ENCODE measurements at regions of chr1 and their contacts with region 1.

Region 1: GRCh38 chr1:169546087-169546995 is 39.9 kb downstream of the F5 start:
- DNase-seq: peak; percentile 65 to 68 (median 66)
- H3K4me3 ChIP-seq: no peak overlapping the region
- H3K4me3 Mint-ChIP-seq: no peak overlapping the region
- H3K27ac ChIP-seq: no peak overlapping the region
- H3K27ac Mint-ChIP-seq: no peak overlapping the region
- H3K4me1 ChIP-seq: no peaks in the 10 kb centered on the region
- H3K4me1 Mint-ChIP-seq: peaks cover 0 to 2% (median under 1%) of the 10 kb centered on the region in 4 donors
- H3K27me3 ChIP-seq: no peaks in the 10 kb centered on the region
- H3K27me3 Mint-ChIP-seq: no peaks in the 10 kb centered on the region

Region 2: DNA sequence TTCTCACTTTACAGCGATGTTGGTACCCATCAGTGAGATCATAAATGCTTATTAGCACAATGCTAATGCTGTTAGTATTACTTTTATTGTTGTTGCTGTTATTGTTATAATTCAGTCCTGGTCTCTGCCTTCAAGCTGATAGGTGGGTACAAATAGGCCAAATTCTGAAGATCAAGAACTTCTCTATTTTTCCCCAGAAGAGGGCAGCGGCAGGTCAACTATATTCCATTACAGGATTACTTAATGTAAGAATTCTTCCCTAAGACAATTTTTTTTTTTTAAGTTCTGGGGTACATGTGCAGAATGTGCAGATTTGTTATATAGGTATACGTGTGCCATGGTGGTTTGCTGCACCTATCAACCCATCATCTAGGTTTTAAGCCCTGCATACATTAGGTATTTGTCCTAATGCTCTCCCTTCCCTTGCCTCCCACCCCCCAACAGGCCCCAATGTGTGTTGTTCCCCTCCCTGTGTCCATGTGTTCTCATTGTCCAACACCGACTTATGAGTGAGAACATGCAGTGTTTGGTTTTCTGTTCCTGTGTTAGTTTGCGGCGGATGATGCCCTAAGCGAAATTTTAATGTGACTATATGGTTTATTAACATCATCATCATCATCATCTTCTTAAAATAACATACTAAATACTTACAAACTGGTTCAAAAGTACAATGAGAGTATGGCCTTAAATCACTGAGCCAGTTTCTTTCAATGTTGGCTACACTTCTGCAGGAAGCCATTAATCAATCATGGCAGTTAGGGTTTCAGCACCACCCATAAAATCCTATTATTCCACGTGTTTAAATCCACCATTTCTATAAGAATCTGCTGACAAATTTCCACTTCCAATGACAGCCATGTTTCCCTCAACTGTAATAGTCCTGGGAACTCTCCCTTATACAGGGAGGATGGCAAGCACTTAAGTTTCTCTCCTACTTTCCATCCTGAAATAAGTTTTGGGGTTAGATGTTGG is 79.8 kb before region 1 on chr1:
- CTCF ChIA-PET with region 1: interaction called, 28 read pairs
- POLR2A ChIA-PET with region 1: interaction called, 5 read pairs
- intact Hi-C with region 1: loop called (anchors 1 kb)
- DNase-seq: peak in 2 of 5 donors; percentile 12 to 24
- H3K4me3 ChIP-seq: no peak overlapping the region
- H3K4me3 Mint-ChIP-seq: no peak overlapping the region
- H3K27ac ChIP-seq: no peak overlapping the region
- H3K27ac Mint-ChIP-seq: peak overlapping the region in 1 of 7 donors; percentile 17
- H3K4me1 ChIP-seq: no peaks in the 10 kb centered on the region
- H3K4me1 Mint-ChIP-seq: no peaks in the 10 kb centered on the region
- H3K27me3 ChIP-seq: no peaks in the 10 kb centered on the region
- H3K27me3 Mint-ChIP-seq: no peaks in the 10 kb centered on the region

Region 3: DNA sequence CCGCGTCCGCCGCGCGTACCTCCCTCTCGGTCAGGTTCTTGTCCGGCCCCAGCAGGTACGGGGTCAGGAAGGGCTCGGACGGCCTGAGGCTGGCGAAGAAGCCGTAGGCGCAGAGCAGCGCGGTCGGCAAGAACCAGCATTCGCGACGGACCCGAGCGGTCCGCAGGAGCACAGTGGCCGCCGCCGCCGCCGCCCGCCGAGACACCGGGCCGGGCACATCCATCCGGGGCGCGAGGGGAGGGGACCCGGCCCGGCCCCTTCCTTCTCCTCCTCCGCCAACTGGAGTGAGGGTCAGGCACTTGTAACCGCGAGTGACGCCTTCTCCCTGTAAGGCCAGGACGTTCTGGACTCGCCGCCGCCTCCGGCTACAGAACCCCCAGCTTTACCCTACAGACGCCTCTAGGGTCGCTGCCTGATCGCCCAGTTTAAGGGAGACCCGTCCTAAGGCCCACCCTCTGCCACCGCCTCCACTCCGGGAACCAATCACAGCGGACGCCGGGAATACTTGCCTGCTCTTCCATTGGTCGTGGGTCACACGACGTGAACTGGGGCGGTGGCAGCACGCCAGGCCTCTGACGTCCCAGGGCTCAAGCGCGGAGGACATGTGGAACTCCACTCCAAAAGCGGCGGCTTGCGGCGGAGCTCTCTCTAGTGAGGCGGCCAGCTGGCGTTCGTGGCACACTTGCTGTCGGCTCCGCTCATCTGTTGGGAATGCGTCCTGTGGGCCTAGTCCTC is 60.6 kb before region 1 on chr1 and contains the start of gene SLC19A2:
- CTCF ChIA-PET with region 1: interaction called, 6 read pairs
- POLR2A ChIA-PET with region 1: no interaction called
- intact Hi-C with region 1: loop called (anchors 5 kb)
- DNase-seq: peak; percentile 89 to 96 (median 91)
- H3K4me3 ChIP-seq: peak within 1 kb of the TSS; percentile 60 to 63
- H3K4me3 Mint-ChIP-seq: peak within 1 kb of the TSS; percentile 93 to 97 (median 95)
- H3K27ac ChIP-seq: peak within 1 kb of the TSS; percentile 73
- H3K27ac Mint-ChIP-seq: peak within 1 kb of the TSS; percentile 88 to 96 (median 94)
- H3K4me1 ChIP-seq: peaks cover 20% of the 10 kb centered on the region
- H3K4me1 Mint-ChIP-seq: peaks cover 28 to 37% (median 30%) of the 10 kb centered on the region in 4 donors
- H3K27me3 ChIP-seq: no peaks in the 10 kb centered on the region
- H3K27me3 Mint-ChIP-seq: no peaks in the 10 kb centered on the region
- total RNA-seq, gene SLC19A2: 4.1 to 4.5 TPM

Region 4: GRCh38 chr1:169557131-169557530 is 10.8 kb after region 1 on chr1:
- CTCF ChIA-PET with region 1: interaction called, 53 read pairs
- POLR2A ChIA-PET with region 1: no interaction called
- intact Hi-C with region 1: no loop called
- DNase-seq: no peak
- H3K4me3 ChIP-seq: no peak overlapping the region
- H3K4me3 Mint-ChIP-seq: no peak overlapping the region
- H3K27ac ChIP-seq: no peak overlapping the region
- H3K27ac Mint-ChIP-seq: no peak overlapping the region
- H3K4me1 ChIP-seq: no peaks in the 10 kb centered on the region
- H3K4me1 Mint-ChIP-seq: no peaks in the 10 kb centered on the region
- H3K27me3 ChIP-seq: no peaks in the 10 kb centered on the region
- H3K27me3 Mint-ChIP-seq: peaks cover 0 to 2% of the 10 kb centered on the region in 2 donors

Region 5: DNA sequence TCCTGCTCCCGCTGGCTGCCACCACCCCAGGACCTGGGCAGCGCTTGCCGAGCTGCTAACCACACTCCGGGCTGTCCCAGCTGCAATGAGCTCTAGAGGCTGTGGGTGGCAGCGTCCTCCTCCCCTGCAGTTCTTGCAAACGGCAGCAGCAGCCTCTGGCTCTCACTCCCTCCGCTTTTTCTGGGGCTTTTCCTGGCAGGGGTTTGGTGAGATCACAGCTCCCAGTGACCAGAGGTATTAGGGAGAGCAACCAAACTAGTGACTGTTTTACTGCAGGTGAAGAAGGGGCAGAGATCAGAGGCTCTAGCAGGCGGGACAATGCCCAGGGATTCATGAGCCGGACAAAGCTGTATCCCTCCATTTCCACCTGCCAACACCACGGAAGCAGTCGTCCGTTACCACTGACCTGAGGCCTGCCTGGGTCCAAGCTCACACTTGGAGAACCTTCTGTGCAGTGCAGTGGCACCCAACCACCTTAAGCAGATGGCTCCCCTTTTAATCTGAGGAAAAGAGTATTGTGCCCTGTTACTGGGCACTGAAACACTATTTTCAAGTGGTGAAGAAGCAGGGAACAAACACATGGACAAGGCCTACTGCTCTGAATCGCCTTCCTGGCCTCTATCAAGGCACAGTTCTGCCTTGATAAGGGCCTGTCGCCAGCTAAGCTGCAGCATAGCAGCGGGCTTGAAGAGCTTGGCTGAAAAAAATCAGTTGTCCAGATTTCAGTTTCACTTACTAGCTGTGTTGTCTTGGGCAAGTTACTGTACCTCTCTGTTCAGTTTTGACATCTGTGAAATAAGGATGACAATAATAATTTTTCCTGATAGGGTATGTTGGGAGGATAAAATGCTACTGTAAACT is 40.3 kb after region 1 on chr1 and contains the start of gene F5:
- CTCF ChIA-PET with region 1: interaction called, 35 read pairs
- POLR2A ChIA-PET with region 1: no interaction called
- intact Hi-C with region 1: loop called (anchors 2 kb)
- DNase-seq: peak; percentile 67 to 78 (median 72)
- H3K4me3 ChIP-seq: peak within 1 kb of the TSS; percentile 47 to 62
- H3K4me3 Mint-ChIP-seq: peak within 1 kb of the TSS; percentile 86 to 94 (median 89)
- H3K27ac ChIP-seq: peak within 1 kb of the TSS; percentile 36
- H3K27ac Mint-ChIP-seq: peak within 1 kb of the TSS; percentile 58 to 95 (median 74)
- H3K4me1 ChIP-seq: peaks cover 52% of the 10 kb centered on the region
- H3K4me1 Mint-ChIP-seq: peaks cover 15 to 51% (median 37%) of the 10 kb centered on the region in 4 donors
- H3K27me3 ChIP-seq: no peaks in the 10 kb centered on the region
- H3K27me3 Mint-ChIP-seq: peaks cover 2 to 11% of the 10 kb centered on the region in 2 donors
- total RNA-seq, gene F5: 4.9 to 6.1 TPM

Region 6: GRCh38 chr1:169809370-169810095 is 263.2 kb after region 1 on chr1:
- CTCF ChIA-PET with region 1: interaction called, 110 read pairs
- POLR2A ChIA-PET with region 1: no interaction called
- intact Hi-C with region 1: loop called (anchors 1 kb)
- DNase-seq: peak in 4 of 5 donors; percentile 31 to 37 (median 34)
- H3K4me3 ChIP-seq: no peak overlapping the region
- H3K4me3 Mint-ChIP-seq: no peak overlapping the region
- H3K27ac ChIP-seq: no peak overlapping the region
- H3K27ac Mint-ChIP-seq: peak overlapping the region in 1 of 7 donors; percentile 38
- H3K4me1 ChIP-seq: no peaks in the 10 kb centered on the region
- H3K4me1 Mint-ChIP-seq: peaks cover 0 to 1% (median 0%) of the 10 kb centered on the region in 4 donors
- H3K27me3 ChIP-seq: no peaks in the 10 kb centered on the region
- H3K27me3 Mint-ChIP-seq: no peaks in the 10 kb centered on the region

Region 7: GRCh38 chr1:169860187-169860586 is 313.8 kb after region 1 on chr1:
- CTCF ChIA-PET with region 1: no interaction called
- POLR2A ChIA-PET with region 1: no interaction called
- intact Hi-C with region 1: loop called (anchors 5 kb)
- DNase-seq: no peak
- H3K4me3 ChIP-seq: no peak overlapping the region
- H3K4me3 Mint-ChIP-seq: no peak overlapping the region
- H3K27ac ChIP-seq: no peak overlapping the region
- H3K27ac Mint-ChIP-seq: peak overlapping the region in 1 of 7 donors; percentile 41
- H3K4me1 ChIP-seq: no peaks in the 10 kb centered on the region
- H3K4me1 Mint-ChIP-seq: peaks cover 4 to 8% (median 6%) of the 10 kb centered on the region in 4 donors
- H3K27me3 ChIP-seq: no peaks in the 10 kb centered on the region
- H3K27me3 Mint-ChIP-seq: no peaks in the 10 kb centered on the region

Measured in CD4-positive, alpha-beta memory T cell (primary cell).